ENCODE measurements at regions of chr10 and their contacts with region 1.

Region 1: DNA sequence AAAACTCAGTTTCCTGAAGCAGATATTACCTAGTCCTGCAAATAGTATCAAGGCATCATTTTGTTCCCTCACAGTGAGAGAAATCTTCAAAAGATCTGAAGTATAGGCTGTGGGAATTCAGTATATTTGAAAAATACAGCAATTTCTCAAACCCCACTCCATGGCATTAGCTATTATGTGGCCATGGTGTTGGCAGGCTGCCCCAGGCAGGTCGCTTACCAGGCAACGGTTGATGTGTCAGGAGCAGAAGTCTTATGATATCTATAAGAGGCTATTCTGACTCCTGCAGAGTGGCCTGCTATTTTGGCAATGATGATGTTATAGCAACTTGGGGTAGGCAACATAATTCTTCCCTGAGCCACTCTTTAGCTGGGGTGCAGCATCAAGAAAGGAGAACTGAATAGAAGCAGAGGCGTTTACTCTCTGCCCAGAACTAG is 187.9 kb downstream of the PLXDC2 start:
- DNase-seq: peak; percentile 28
- H3K4me3 ChIP-seq: no peak overlapping the region
- H3K27ac ChIP-seq: peak overlapping the region; percentile 49 to 77 (median 71)
- H3K4me1 ChIP-seq: peaks cover 0 to 16% (median 10%) of the 10 kb centered on the region in 4 donors
- H3K27me3 ChIP-seq: no peaks in the 10 kb centered on the region
- CTCF ChIP-seq: no peak
- EP300 ChIP-seq: no peak
- POLR2A ChIP-seq: no peak

Region 2: GRCh38 chr10:20059084-20059835 is 55.2 kb after region 1 on chr10:
- in situ Hi-C with region 1: no loop called
- intact Hi-C with region 1: loop called (anchors 5 kb)
- DNase-seq: no peak
- H3K4me3 ChIP-seq: no peak overlapping the region
- H3K27ac ChIP-seq: no peak overlapping the region
- H3K4me1 ChIP-seq: peaks cover 0 to 9% (median 0%) of the 10 kb centered on the region in 4 donors
- H3K27me3 ChIP-seq: no peaks in the 10 kb centered on the region
- CTCF ChIP-seq: no peak
- EP300 ChIP-seq: no peak
- POLR2A ChIP-seq: no peak